Naive thymus-derived CD8-positive, alpha-beta T cell (primary cell): ENCODE measurements at regions of chr12 and their contacts with region 1.

Region 1: DNA sequence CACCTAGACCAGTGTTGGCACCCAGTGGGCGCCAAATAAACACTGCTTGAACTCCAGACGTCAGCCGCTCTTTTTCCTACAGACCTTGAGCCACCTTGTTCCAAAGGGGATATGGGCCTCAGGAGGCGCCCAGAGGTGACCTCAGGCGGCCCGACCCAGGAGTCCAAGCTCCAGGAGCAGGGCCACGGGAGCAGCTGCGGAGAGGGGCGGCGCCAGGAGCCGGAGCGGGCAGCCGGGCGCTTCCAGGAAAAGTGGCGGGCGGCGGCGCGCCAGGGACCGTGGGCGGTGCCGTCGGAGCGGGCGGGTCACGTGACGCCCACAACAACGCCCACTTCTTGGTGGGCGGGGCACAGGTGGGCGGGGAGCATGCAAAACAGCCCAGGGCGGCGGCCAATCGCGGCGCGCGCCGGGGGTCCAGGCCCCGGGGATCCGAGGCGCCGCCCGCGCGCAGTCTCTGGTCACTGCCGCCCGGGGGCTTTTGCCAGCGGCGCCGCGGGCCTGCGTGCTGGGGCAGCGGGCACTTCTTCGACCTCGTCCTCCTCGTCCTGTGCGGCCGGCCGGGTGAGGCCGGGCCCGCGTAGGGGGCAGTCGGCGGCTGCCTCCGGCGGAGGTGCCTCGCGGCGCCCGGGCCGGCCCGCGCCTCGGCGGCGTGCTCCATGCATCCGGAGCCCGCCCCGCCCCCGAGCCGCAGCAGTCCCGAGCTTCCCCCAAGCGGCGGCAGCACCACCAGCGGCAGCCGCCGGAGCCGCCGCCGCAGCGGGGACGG is at the start of gene ORAI1:
- DNase-seq: peak; percentile 91 to 98 (median 96)
- ATAC-seq: peak; percentile 68 to 69
- H3K4me3 Mint-ChIP-seq: peak within 1 kb of the TSS; percentile 93 to 98 (median 94)
- H3K27ac Mint-ChIP-seq: peak within 1 kb of the TSS; percentile 91 to 98 (median 97)
- H3K4me1 Mint-ChIP-seq: peaks cover 22 to 53% (median 48%) of the 10 kb centered on the region in 4 donors
- H3K27me3 Mint-ChIP-seq: no peaks in the 10 kb centered on the region
- polyA plus RNA-seq, gene ORAI1: 122 to 158 (median 134) TPM

Region 2: DNA sequence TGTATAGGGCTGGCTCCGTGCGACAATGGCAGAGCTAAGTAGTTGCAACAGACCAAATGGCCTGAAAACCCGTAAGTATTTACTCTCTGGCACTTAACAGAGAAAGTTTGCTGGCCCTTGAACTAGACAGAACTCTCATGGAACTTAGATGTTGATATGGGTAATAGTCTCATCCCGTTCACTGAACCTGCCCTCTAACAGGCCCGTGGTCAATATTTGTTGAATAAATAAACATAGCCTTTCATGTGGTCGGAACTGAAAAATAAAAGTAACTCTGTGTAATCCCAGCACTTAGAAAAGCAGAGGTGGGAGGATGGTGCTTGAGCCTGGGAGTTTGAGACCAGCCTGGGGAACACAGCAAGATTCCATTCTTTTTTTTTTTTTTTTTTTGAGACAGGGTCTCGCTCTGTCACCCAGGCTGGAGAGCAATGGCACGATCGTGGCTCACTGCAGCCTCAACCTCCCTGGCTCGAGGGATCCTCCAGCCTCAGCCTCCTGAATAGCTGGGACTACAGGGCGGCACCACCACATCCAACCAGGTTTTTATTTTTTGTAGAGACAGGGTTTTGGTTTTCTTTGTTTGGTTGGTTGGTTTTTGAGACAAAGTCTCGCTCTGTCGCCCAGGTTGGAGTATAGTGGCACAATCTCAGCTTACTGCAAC is 75.2 kb before region 1 on chr12:
- POLR2A ChIA-PET with region 1: interaction called, 24 read pairs
- DNase-seq: no peak
- ATAC-seq: no peak
- H3K4me3 Mint-ChIP-seq: no peak overlapping the region
- H3K27ac Mint-ChIP-seq: peak overlapping the region in 2 of 10 donors; percentile 32 to 89
- H3K4me1 Mint-ChIP-seq: peaks cover 0 to 12% (median 3%) of the 10 kb centered on the region in 4 donors
- H3K27me3 Mint-ChIP-seq: no peaks in the 10 kb centered on the region

Region 3: GRCh38 chr12:121579981-121580868 is 46.0 kb before region 1 on chr12:
- POLR2A ChIA-PET with region 1: interaction called, 150 read pairs
- DNase-seq: peak; percentile 59 to 88 (median 70)
- ATAC-seq: peak; percentile 65 to 66
- H3K4me3 Mint-ChIP-seq: peak overlapping the region; percentile 95 to 99 (median 97)
- H3K27ac Mint-ChIP-seq: peak overlapping the region; percentile 91 to 100 (median 99)
- H3K4me1 Mint-ChIP-seq: peaks cover 20 to 45% (median 36%) of the 10 kb centered on the region in 4 donors
- H3K27me3 Mint-ChIP-seq: no peaks in the 10 kb centered on the region

Region 4: GRCh38 chr12:121637231-121637914 is 11.1 kb after region 1 on chr12:
- POLR2A ChIA-PET with region 1: interaction called, 101 read pairs
- DNase-seq: peak; percentile 23 to 78 (median 52)
- ATAC-seq: peak; percentile 72 to 84
- H3K4me3 Mint-ChIP-seq: peak overlapping the region; percentile 64 to 85 (median 78)
- H3K27ac Mint-ChIP-seq: peak overlapping the region; percentile 82 to 97 (median 94)
- H3K4me1 Mint-ChIP-seq: peaks cover 24 to 82% (median 65%) of the 10 kb centered on the region in 4 donors
- H3K27me3 Mint-ChIP-seq: no peaks in the 10 kb centered on the region

Region 5: DNA sequence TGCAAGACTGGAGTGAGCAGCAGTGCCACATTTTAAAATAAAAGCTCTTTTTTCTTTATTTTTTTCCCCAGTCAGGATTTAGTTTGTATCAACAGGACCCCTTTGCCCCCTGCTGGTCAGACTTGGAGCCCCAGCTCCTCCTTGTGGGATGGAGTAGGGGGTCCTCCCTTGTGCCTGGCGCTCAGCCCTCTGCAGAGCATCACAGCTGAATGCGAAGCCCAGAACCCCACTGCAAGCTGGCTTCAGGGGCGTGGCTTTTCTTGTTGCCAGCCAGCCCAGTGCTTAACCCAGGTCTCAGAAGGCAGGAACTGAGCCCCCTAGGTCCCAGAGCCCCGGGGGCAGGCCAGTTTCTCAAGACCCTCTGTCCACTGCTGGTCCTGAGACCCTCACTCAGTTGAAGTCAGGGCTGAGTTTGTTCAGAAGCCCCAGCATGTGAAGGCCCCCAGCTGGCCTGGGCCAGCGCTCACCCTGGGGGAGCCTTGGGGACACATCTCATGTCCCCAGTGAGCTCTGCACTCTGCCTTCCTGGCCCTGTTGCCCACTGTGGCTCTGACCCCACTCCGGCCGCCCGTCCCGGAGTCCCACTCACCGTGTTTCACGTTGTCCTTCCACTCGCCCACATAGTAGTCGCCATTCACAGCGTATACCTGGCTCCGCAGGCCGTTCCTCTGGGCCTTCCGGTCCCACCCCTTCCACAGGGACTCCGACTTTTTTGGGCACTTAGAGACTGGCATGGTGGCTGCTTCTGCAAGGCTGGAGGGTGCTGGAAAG is 42.7 kb after region 1 on chr12:
- POLR2A ChIA-PET with region 1: interaction called, 291 read pairs
- DNase-seq: peak; percentile 46 to 85 (median 60)
- ATAC-seq: no peak
- H3K4me3 Mint-ChIP-seq: peak overlapping the region in 7 of 10 donors; percentile 18 to 68 (median 45)
- H3K27ac Mint-ChIP-seq: peak overlapping the region in 9 of 10 donors; percentile 48 to 94 (median 85)
- H3K4me1 Mint-ChIP-seq: peaks cover 24 to 64% (median 62%) of the 10 kb centered on the region in 4 donors
- H3K27me3 Mint-ChIP-seq: no peaks in the 10 kb centered on the region

Region 6: GRCh38 chr12:121688966-121689365 is 62.7 kb after region 1 on chr12:
- POLR2A ChIA-PET with region 1: interaction called, 33 read pairs
- DNase-seq: no peak
- ATAC-seq: no peak
- H3K4me3 Mint-ChIP-seq: peak overlapping the region in 1 of 10 donors; percentile 7
- H3K27ac Mint-ChIP-seq: peak overlapping the region in 6 of 10 donors; percentile 27 to 68 (median 48)
- H3K4me1 Mint-ChIP-seq: peaks cover 4 to 13% (median 11%) of the 10 kb centered on the region in 4 donors
- H3K27me3 Mint-ChIP-seq: no peaks in the 10 kb centered on the region

Region 7: GRCh38 chr12:121773011-121773777 is 146.9 kb after region 1 on chr12:
- POLR2A ChIA-PET with region 1: no interaction called
- DNase-seq: peak; percentile 65 to 90 (median 78)
- ATAC-seq: peak; percentile 81 to 85
- H3K4me3 Mint-ChIP-seq: no peak overlapping the region
- H3K27ac Mint-ChIP-seq: peak overlapping the region in 8 of 10 donors; percentile 33 to 80 (median 70)
- H3K4me1 Mint-ChIP-seq: peaks cover 3 to 22% (median 17%) of the 10 kb centered on the region in 4 donors
- H3K27me3 Mint-ChIP-seq: no peaks in the 10 kb centered on the region